ENCODE measurements at regions of chr1 and their contacts with region 1.

Region 1: GRCh38 chr1:212857992-212858460 is at the start of gene FLVCR1:
- DNase-seq: peak; percentile 93
- ATAC-seq: peak; percentile 97
- H3K4me3 ChIP-seq: peak within 1 kb of the TSS; percentile 74 to 93 (median 90)
- H3K27ac ChIP-seq: peak within 1 kb of the TSS; percentile 96
- H3K4me1 ChIP-seq: peaks cover 66% of the 10 kb centered on the region
- H3K27me3 ChIP-seq: no peaks in the 10 kb centered on the region; a peak in 1 of 5 replicates
- CTCF ChIP-seq: no peak
- EP300 ChIP-seq: no peak
- POLR2A ChIP-seq: peak; percentile 56 to 93
- RAD21 ChIP-seq: 0 out of 2 replicates have a peak, but pooled peaks have one; percentile 38
- total RNA-seq, gene FLVCR1: 18.6 and 39.8 TPM in 2 replicates

Region 2: DNA sequence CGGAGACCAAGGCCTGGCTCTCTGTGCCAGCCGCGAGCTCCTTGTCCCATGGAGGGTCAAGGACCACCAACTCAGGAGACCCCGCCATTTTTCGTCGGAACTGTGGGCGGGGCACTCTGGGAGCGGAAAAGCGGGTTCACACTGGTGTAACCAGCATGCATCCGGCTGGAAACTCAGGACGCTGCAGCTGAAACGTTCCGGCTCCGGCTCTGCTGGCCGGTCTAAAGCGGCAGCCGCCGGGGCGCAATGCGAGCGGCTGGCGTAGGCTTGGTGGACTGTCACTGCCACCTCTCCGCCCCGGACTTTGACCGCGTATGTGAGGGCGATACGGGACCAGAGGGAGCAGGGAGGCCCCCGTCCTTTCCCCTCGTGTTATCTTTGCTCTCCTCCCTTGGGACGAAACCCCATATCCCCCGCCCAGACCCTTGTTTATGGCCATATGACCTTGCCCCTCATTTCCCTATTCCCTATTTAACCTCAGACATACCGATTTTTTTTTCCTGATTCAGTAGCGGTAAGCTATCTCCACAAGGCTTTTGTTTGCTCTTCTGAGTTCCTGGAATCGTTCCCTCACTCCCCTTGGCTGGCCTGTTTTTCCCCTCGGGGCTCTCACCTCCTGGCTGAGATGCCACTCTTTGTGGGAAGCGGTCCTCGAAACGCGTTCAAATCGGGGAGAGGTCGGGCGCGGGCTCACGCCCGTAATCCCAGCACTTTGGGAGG is 66.2 kb before region 1 on chr1 and contains the starts of genes NSL1 and TATDN3:
- CTCF ChIA-PET with region 1: no interaction called
- POLR2A ChIA-PET with region 1: interaction called, 80 read pairs
- in situ Hi-C with region 1: no loop called
- intact Hi-C with region 1: loop called (anchors 1 kb)
- DNase-seq: peak; percentile 93
- ATAC-seq: peak; percentile 99
- H3K4me3 ChIP-seq: peak within 1 kb of the TSS; percentile 88 to 92 (median 88)
- H3K27ac ChIP-seq: peak within 1 kb of the TSS; percentile 100
- H3K4me1 ChIP-seq: peaks cover 66% of the 10 kb centered on the region
- H3K27me3 ChIP-seq: no peaks in the 10 kb centered on the region; a peak in 1 of 5 replicates
- CTCF ChIP-seq: peak; percentile 53
- EP300 ChIP-seq: peak in 1 of 2 experiments; percentile 66; a peak in 1 of 4 replicates
- POLR2A ChIP-seq: peak; percentile 84 to 95
- RAD21 ChIP-seq: peak; percentile 72
- total RNA-seq, gene NSL1: 77.4 and 119 TPM in 2 replicates
- total RNA-seq, gene TATDN3: 8.6 and 10.7 TPM in 2 replicates

Region 3: DNA sequence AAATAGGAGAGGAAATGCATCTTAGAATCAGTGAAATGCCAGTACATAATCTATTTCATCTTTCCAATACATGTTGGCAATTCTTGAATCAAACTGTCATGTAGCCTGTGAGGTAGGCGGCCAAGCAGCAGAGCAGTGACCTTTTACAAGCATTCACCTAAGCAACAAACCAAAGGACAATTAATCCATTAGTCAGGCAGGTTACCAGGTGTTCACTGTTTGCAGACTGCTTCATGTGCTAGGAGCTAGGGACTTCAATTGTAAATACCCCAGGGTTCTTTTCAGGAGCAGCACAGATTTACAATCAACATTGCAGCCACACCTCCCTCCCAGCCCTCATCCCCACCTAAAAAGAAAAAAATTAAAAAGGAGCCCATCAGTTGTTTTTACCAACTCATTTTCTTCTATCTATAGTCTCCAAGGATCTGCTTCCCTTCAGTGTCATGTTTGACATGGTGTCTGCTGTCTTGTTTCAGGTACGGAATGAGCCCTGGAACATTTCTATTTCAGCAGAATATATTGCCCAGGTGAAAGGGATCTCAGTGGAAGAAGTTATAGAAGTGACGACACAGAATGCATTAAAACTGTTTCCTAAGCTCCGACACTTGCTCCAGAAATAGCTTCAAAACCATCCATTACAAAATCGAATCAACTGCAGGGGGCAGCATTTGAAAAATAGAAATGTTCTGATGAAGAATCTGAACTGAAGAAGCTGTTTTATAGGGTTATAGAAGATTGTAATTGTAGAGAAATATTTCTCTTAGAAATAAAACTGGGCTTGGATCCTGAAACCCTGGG is 43.3 kb before region 1 on chr1:
- CTCF ChIA-PET with region 1: no interaction called
- POLR2A ChIA-PET with region 1: interaction called, 18 read pairs
- in situ Hi-C with region 1: loop called (anchors 5 kb)
- intact Hi-C with region 1: loop called (anchors 2 kb)
- DNase-seq: peak; percentile 25
- ATAC-seq: no peak
- H3K4me3 ChIP-seq: no peak overlapping the region
- H3K27ac ChIP-seq: no peak overlapping the region
- H3K4me1 ChIP-seq: peaks cover 41% of the 10 kb centered on the region
- H3K27me3 ChIP-seq: no peaks in the 10 kb centered on the region
- CTCF ChIP-seq: peak; percentile 44
- EP300 ChIP-seq: no peak
- POLR2A ChIP-seq: no peak
- RAD21 ChIP-seq: no peak

Region 4: GRCh38 chr1:212827824-212828278 is 30.2 kb before region 1 on chr1:
- CTCF ChIA-PET with region 1: no interaction called
- POLR2A ChIA-PET with region 1: interaction called, 48 read pairs
- in situ Hi-C with region 1: no loop called
- intact Hi-C with region 1: no loop called
- DNase-seq: peak; percentile 90
- ATAC-seq: peak; percentile 92
- H3K4me3 ChIP-seq: peak overlapping the region; percentile 32 to 64 (median 36); a peak in 5 of 6 replicates
- H3K27ac ChIP-seq: peak overlapping the region; percentile 98
- H3K4me1 ChIP-seq: peaks cover 48% of the 10 kb centered on the region
- H3K27me3 ChIP-seq: no peaks in the 10 kb centered on the region
- CTCF ChIP-seq: no peak
- EP300 ChIP-seq: peak in 1 of 2 experiments; percentile 86; a peak in 2 of 4 replicates
- POLR2A ChIP-seq: 0 out of 4 replicates have a peak, but pooled peaks of 1 of the 2 experiments have one; percentile 7
- RAD21 ChIP-seq: no peak

Region 5: GRCh38 chr1:212838145-212838544 is 19.9 kb before region 1 on chr1:
- CTCF ChIA-PET with region 1: no interaction called
- POLR2A ChIA-PET with region 1: interaction called, 12 read pairs
- in situ Hi-C with region 1: no loop called
- intact Hi-C with region 1: no loop called
- DNase-seq: no peak
- ATAC-seq: no peak
- H3K4me3 ChIP-seq: no peak overlapping the region
- H3K27ac ChIP-seq: no peak overlapping the region
- H3K4me1 ChIP-seq: peaks cover 17% of the 10 kb centered on the region
- H3K27me3 ChIP-seq: no peaks in the 10 kb centered on the region
- CTCF ChIP-seq: no peak
- EP300 ChIP-seq: no peak
- POLR2A ChIP-seq: no peak
- RAD21 ChIP-seq: no peak

Region 6: DNA sequence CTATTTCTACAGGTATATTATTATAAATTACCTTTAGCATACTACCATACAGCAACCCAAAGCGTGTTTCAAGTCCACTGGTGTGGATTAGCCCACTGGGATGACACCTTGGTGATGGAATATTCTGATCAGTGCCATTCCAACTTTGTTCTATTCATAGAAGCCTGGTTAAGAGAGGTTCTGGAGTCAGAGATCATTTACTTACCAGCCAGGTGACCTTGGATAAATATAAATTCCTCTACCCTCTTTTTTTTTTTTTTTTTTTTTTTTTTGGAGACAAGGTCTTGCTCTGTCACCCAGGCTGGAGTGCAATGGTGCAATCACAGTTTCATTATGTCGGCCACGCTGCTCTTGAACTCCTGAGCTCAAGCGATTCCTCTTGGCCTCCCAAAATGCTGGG is 10.5 kb before region 1 on chr1 and contains the start of gene SPATA45:
- CTCF ChIA-PET with region 1: no interaction called
- POLR2A ChIA-PET with region 1: interaction called, 10 read pairs
- in situ Hi-C with region 1: no loop called
- intact Hi-C with region 1: no loop called
- DNase-seq: peak; percentile 32
- ATAC-seq: peak; percentile 48
- H3K4me3 ChIP-seq: no peak within 1 kb of the TSS
- H3K27ac ChIP-seq: no peak within 1 kb of the TSS
- H3K4me1 ChIP-seq: peaks cover 18% of the 10 kb centered on the region
- H3K27me3 ChIP-seq: no peaks in the 10 kb centered on the region
- CTCF ChIP-seq: no peak
- EP300 ChIP-seq: no peak
- POLR2A ChIP-seq: no peak
- RAD21 ChIP-seq: no peak
- total RNA-seq, gene SPATA45: 0.64 and 0.86 TPM in 2 replicates

Region 7: GRCh38 chr1:212871976-212872375 is 13.9 kb after region 1 on chr1:
- CTCF ChIA-PET with region 1: no interaction called
- POLR2A ChIA-PET with region 1: interaction called, 12 read pairs
- in situ Hi-C with region 1: no loop called
- intact Hi-C with region 1: no loop called
- DNase-seq: no peak
- ATAC-seq: no peak
- H3K4me3 ChIP-seq: no peak overlapping the region
- H3K27ac ChIP-seq: no peak overlapping the region
- H3K4me1 ChIP-seq: peaks cover 16% of the 10 kb centered on the region
- H3K27me3 ChIP-seq: no peaks in the 10 kb centered on the region
- CTCF ChIP-seq: no peak
- EP300 ChIP-seq: no peak
- POLR2A ChIP-seq: no peak
- RAD21 ChIP-seq: no peak

Measured in HepG2 (cell line).